ENCODE measurements at regions of chr18 and their contacts with region 1.

Region 1: DNA sequence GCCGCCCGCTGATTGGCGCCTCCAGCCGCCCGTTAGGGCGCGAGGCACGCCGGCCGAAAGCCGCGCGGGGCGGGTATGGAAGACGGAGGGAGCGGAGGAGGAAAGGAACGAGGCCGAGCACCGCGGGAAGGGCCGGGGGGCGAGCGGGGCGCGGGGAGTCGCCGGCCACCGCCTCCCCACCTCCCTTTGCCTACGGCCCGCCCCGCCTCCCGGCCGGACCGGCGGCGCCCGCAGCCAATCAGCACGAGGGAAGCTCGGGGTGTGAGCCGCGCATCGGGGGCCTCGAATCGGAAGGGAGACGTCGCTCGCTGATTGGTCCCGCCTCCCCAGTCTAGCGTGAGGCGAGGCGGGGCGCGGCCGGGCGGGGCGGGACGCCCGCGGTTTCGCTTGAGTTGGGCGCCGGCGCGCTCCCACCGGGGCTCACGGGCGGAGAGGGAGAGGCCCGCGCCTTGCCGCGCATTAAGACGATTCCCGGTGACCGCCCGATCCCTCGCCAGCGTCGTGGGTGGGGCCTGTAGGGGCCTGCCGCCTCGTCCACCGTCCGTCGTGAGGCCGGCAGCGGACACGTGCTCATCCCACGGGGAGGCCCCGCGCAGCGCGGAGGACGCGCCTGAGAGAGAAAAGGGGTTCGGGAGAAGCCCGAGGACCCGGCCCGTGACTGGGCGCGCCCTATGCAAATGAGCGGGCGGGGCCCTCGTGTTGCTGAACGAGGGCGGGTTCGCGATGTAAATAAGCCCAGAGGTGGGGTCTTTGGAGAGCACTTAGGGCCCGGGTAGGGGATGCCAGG is 665 bp upstream of the SMAD2 start:
- DNase-seq: peak; percentile 86 to 98
- H3K4me3 ChIP-seq: peak overlapping the region; percentile 97 to 98
- H3K27ac ChIP-seq: peak overlapping the region; percentile 96 to 98
- H3K4me1 ChIP-seq: peaks cover 4 to 18% of the 10 kb centered on the region in 2 donors
- H3K27me3 ChIP-seq: no peaks in the 10 kb centered on the region
- CTCF ChIP-seq: no peak

Region 2: GRCh38 chr18:47863041-47863440 is 68.1 kb before region 1 on chr18:
- intact Hi-C with region 1: loop called (anchors 5 kb)
- DNase-seq: peak in 1 of 2 donors; percentile 66
- H3K4me3 ChIP-seq: no peak overlapping the region
- H3K27ac ChIP-seq: no peak overlapping the region
- H3K4me1 ChIP-seq: peaks cover 0 to 6% of the 10 kb centered on the region in 2 donors
- H3K27me3 ChIP-seq: no peaks in the 10 kb centered on the region
- CTCF ChIP-seq: no peak

Region 3: GRCh38 chr18:47873625-47874024 is 57.5 kb before region 1 on chr18:
- intact Hi-C with region 1: no loop called
- DNase-seq: no peak
- H3K4me3 ChIP-seq: no peak overlapping the region
- H3K27ac ChIP-seq: no peak overlapping the region
- H3K4me1 ChIP-seq: peaks cover 0 to 4% of the 10 kb centered on the region in 2 donors
- H3K27me3 ChIP-seq: no peaks in the 10 kb centered on the region
- CTCF ChIP-seq: no peak

Region 4: GRCh38 chr18:47917923-47918610 is 13.1 kb before region 1 on chr18:
- intact Hi-C with region 1: no loop called
- DNase-seq: no peak
- H3K4me3 ChIP-seq: no peak overlapping the region
- H3K27ac ChIP-seq: no peak overlapping the region
- H3K4me1 ChIP-seq: peaks cover 3 to 7% of the 10 kb centered on the region in 2 donors
- H3K27me3 ChIP-seq: no peaks in the 10 kb centered on the region
- CTCF ChIP-seq: no peak

Region 5: DNA sequence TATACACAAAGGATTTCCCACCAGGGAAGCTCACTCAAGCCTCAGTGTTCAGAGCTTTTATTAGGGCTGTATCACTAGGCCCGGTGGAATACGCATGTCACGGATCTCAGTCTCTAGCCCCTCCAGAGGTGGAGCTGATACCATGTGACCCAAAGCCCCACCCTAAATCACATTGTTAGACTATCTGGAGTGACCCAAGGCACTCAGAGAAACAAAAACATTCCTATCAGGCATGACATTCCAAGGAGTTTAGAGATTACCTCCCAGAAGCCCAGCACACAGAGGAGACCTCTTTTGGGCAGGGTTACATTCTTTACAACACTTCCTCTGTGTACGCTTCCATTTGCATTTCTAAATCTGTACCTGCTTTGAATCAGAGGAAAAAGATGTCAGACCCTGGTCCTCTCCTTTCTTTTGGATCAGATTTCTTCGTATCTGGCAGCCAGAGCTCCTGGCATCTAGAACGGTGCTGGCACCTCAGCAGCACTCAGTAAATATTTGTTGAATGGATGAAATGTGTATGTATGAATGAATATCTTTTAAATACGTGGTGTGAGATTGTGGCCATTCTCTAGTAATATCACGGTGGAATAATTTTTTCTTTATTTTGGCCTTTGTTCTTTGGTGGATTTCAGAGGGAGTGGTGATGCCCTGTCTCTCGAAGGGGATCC is 37.0 kb after region 1 on chr18:
- intact Hi-C with region 1: loop called (anchors 5 kb)
- DNase-seq: no peak
- H3K4me3 ChIP-seq: no peak overlapping the region
- H3K27ac ChIP-seq: peak overlapping the region; percentile 53 to 84
- H3K4me1 ChIP-seq: peaks cover 0 to 13% of the 10 kb centered on the region in 2 donors
- H3K27me3 ChIP-seq: no peaks in the 10 kb centered on the region
- CTCF ChIP-seq: no peak

Region 6: DNA sequence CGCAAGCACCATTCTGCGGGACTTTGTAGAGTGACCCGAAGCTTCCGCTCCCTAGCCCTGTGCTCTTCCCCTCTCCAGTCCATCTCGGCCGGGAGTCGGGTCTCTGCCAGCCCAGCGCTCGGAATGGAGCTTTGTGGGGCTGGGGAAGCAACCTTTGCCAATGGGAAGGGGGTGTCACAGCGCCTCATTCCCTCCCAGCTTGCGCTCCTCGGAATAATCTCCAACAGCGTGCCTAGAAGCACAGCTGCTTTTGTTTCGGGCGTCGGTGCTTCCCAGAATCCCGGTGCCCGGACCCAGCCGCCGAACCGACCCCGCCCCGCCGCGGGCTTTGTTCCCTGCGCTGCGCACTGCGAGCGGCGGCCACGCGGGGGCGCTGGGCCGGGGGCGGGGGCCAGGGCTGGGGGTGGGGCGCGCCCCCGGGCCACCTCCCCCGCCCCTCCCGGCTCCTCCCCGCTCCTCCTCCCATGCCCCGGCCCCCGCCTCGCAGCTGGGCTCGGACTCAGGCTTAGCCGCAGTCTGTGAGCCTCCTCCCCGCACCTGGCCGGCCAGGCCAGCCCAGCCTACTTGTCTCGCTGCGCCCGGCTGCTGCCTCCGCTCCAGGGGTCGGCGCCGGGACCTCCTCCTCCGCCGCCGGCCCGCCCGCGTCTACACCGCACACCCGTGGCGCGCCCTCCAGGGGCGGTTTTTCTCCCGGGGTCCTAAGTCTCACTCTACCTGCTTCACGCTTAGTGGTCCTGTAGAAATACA is 77.0 kb after region 1 on chr18:
- intact Hi-C with region 1: loop called (anchors 1 kb)
- DNase-seq: peak in 1 of 2 donors; percentile 72
- H3K4me3 ChIP-seq: peak overlapping the region; percentile 62 to 90
- H3K27ac ChIP-seq: peak overlapping the region; percentile 15 to 27
- H3K4me1 ChIP-seq: peaks cover 4 to 5% of the 10 kb centered on the region in 2 donors
- H3K27me3 ChIP-seq: no peaks in the 10 kb centered on the region
- CTCF ChIP-seq: peak; percentile 9 to 34 (median 23)

Region 7: GRCh38 chr18:48030616-48031480 is 99.7 kb after region 1 on chr18:
- intact Hi-C with region 1: no loop called
- DNase-seq: no peak
- H3K4me3 ChIP-seq: no peak overlapping the region
- H3K27ac ChIP-seq: no peak overlapping the region
- H3K4me1 ChIP-seq: peaks cover 6 to 12% of the 10 kb centered on the region in 2 donors
- H3K27me3 ChIP-seq: no peaks in the 10 kb centered on the region
- CTCF ChIP-seq: peak; percentile 46 to 78 (median 68)

Region 8: GRCh38 chr18:48161191-48161910 is 230.2 kb after region 1 on chr18:
- intact Hi-C with region 1: loop called (anchors 5 kb)
- DNase-seq: peak in 1 of 2 donors; percentile 88
- H3K4me3 ChIP-seq: peak overlapping the region; percentile 67 to 93
- H3K27ac ChIP-seq: peak overlapping the region; percentile 86 to 94
- H3K4me1 ChIP-seq: peaks cover 2 to 12% of the 10 kb centered on the region in 2 donors
- H3K27me3 ChIP-seq: no peaks in the 10 kb centered on the region
- CTCF ChIP-seq: no peak

Region 9: GRCh38 chr18:48445540-48445939 is 514.4 kb after region 1 on chr18:
- intact Hi-C with region 1: loop called (anchors 5 kb)
- DNase-seq: peak; percentile 37 to 90
- H3K4me3 ChIP-seq: no peak overlapping the region
- H3K27ac ChIP-seq: no peak overlapping the region
- H3K4me1 ChIP-seq: peaks cover 8 to 26% of the 10 kb centered on the region in 2 donors
- H3K27me3 ChIP-seq: no peaks in the 10 kb centered on the region
- CTCF ChIP-seq: peak; percentile 70 to 93 (median 85)

Region 10: DNA sequence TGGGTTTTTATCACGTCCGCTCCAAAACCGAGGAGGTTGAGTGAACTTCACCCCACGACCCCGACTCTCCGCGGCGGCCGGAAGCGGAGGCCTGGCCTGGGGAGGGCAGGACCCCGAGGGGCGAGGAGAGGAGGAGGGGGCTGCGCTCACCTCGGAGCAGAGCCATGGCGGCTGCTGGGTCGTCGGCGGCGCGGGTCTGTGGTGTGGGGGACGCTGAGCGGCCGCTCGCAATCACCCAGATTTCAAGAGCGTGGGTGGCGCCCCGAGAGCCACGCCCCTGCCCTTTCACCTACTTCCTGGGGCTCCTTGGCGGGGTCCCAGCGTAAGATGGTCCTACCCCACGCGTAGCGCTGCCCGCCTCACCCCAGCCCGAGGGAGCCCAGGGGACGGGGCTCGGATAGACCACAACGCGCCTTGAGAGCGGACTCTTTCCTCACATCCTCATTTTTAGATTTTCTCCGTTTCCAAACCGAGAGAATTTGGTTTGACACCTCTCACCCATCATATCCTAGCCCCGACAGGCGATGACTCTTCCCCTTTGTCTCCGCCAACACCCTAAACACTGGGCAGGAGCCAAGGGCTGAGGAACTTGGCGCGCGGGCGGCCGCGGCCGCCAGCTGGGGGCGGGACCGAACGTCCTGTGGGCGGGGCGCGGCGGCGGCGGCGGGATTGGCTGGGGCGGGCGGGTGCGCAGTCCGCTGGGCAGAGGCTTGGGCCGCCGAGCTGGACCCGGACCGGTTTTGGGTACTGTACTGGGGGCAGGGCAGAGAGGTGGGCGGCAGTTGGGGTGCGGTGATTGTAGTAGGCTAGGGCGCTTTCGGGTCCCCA is 1882.4 kb after region 1 on chr18 and contains the start of gene ACAA2:
- intact Hi-C with region 1: loop called (anchors 2 kb)
- DNase-seq: peak; percentile 51 to 92
- H3K4me3 ChIP-seq: peak within 1 kb of the TSS; percentile 79
- H3K27ac ChIP-seq: peak within 1 kb of the TSS; percentile 94 to 98
- H3K4me1 ChIP-seq: peaks cover 7 to 10% of the 10 kb centered on the region in 2 donors
- H3K27me3 ChIP-seq: no peaks in the 10 kb centered on the region
- CTCF ChIP-seq: no peak
- total RNA-seq, gene ACAA2: 33.4 TPM